ENCODE measurements at regions of chr19 and their contacts with region 1.

Region 1: DNA sequence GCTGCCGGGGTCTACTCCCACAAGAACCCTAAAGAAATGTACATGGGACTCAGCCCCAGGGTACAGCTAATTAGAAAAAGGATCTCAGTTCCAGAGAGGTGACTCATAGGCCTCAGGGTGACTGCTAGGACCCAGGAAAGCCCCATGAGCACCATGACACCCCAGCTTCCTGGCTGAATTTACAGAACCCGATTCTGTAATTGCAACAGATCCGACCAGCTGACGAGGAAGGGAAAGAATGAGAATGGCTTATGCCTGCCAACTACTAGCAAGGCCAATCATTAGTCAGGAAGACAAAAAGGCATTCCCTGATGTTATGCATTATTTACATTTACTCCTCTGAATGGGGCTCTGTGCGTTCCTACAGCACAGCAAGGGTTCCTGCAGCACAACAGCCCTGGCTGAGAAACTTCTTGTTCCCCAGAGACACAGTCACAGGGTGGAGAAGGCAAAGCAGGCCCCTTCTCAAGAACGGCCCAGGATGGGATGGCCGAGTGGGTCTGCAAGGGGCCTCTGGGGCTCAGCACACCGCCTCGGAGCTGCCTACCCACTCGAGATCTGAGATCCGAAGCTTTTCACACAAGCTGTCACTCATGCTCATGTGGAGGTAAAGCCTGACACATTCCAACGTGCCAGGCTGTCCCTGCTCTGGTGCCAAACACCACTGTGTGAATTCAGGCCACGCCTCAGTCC is 27.2 kb downstream of the PBX4 start:
- DNase-seq: peak; percentile 98
- H3K4me3 Mint-ChIP-seq: peak overlapping the region; percentile 19
- H3K27ac Mint-ChIP-seq: peak overlapping the region; percentile 54
- H3K4me1 Mint-ChIP-seq: peaks cover 14% of the 10 kb centered on the region
- H3K27me3 Mint-ChIP-seq: no peaks in the 10 kb centered on the region
- CTCF ChIP-seq: no peak

Region 2: DNA sequence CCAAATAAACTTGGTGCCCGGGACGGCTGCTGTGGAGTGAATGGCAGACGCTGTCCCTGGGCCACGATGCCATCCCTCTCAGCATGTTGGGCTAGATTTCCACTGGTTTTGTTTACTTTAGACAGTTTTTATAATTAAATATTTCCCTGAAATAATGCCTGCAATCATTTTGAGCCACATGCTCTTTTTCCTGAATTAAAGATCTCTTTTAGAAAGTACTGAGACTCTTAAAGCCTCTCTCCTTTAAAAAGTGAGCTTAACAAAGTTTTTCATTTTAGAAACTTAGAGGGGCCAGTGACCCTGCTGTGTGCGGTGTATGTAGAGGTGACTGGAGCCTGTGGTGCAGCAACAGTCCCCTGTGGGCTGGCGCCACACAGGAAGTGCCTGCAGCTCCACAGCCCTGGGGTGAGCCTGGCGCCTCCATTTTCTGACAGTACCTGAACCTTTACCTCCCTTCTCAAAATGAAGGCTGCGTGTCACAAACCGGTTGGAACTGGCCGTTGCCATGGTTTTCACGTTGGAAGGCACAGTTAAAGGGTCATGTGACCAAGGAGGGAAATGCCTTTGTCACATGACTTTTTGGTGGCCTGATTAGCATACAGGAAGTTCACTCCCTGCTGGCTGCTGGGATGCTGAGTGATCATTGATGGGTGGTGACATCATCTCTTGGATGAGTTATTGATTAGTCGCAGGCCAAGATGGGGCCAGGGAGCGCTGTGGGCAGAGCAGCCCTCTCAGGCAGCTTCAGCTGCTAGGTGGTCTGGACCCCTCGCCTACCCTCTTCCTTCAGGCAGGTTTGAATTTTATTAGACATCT is 102.2 kb before region 1 on chr19:
- CTCF ChIA-PET with region 1: no interaction called
- POLR2A ChIA-PET with region 1: no interaction called
- intact Hi-C with region 1: no loop called
- DNase-seq: peak; percentile 52
- H3K4me3 Mint-ChIP-seq: peak overlapping the region; percentile 28
- H3K27ac Mint-ChIP-seq: peak overlapping the region; percentile 75
- H3K4me1 Mint-ChIP-seq: peaks cover 12% of the 10 kb centered on the region
- H3K27me3 Mint-ChIP-seq: no peaks in the 10 kb centered on the region
- CTCF ChIP-seq: no peak

Region 3: GRCh38 chr19:19554074-19555023 is 36.9 kb before region 1 on chr19:
- CTCF ChIA-PET with region 1: interaction called, 10 read pairs
- POLR2A ChIA-PET with region 1: interaction called, 4 read pairs
- intact Hi-C with region 1: no loop called
- DNase-seq: peak; percentile 66
- H3K4me3 Mint-ChIP-seq: no peak overlapping the region
- H3K27ac Mint-ChIP-seq: no peak overlapping the region
- H3K4me1 Mint-ChIP-seq: no peaks in the 10 kb centered on the region
- H3K27me3 Mint-ChIP-seq: no peaks in the 10 kb centered on the region
- CTCF ChIP-seq: peak; percentile 70

Region 4: DNA sequence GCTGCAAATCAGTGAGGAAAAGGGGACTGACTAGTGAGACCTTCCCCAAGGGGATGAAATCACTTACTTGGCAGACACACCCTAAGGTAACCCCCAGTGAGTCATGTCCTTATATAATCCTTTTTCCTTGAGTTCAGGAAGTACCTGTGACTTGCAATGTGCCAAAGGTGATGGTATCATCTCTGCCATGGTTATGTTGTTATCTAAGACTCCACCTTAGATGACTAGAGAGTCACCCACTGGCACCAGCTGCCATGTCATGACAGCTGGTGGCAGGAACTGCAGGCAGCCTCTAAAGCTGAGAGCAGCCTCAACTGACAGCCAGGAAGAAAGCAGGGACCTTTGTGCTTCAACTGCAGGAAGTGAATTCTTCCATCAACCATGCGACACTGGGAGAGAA is 14.7 kb after region 1 on chr19:
- CTCF ChIA-PET with region 1: no interaction called
- POLR2A ChIA-PET with region 1: interaction called, 15 read pairs
- intact Hi-C with region 1: no loop called
- DNase-seq: peak; percentile 76
- H3K4me3 Mint-ChIP-seq: no peak overlapping the region
- H3K27ac Mint-ChIP-seq: no peak overlapping the region
- H3K4me1 Mint-ChIP-seq: peaks cover 21% of the 10 kb centered on the region
- H3K27me3 Mint-ChIP-seq: no peaks in the 10 kb centered on the region
- CTCF ChIP-seq: no peak